ENCODE measurements at regions of chr2 and their contacts with region 1.

Region 1: GRCh38 chr2:144937910-144938709 is 418.2 kb upstream of the ZEB2 start:
- DNase-seq: no peak
- ATAC-seq: peak; percentile 80
- H3K4me3 ChIP-seq: no peak overlapping the region
- H3K27ac ChIP-seq: peak overlapping the region; percentile 40 to 93
- H3K4me1 ChIP-seq: peaks cover 7 to 15% of the 10 kb centered on the region in 2 donors
- H3K27me3 ChIP-seq: no peaks in the 10 kb centered on the region

Region 2: DNA sequence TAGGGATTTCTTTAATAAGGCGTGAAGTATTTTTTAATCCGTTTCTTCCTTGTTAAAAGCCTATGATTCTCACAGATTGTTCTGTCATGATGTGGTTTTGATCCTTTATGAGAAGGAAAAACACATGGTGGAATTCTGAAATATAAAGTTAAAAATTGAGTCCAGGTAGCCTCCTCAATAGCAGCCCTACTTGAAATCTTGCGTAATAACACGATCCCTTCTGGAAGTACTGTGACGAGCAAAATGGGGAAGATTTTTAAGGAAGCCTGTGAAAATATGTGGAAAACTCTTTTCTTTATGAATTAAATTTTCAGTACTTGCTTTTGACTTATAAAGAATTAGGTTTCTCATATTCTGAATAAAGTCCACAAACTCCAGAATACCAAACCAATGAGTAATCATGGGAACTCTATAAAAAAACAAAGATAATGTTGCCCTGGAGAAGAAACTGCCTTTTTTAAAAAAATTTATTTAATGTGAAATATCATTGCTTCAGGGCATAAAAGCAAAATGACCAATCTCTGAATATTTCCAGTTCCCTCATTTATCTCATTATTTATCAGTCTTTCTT is 58.2 kb after region 1 on chr2:
- intact Hi-C with region 1: loop called in 1 of 2 experiments (anchors 5 kb)
- DNase-seq: no peak
- ATAC-seq: no peak
- H3K4me3 ChIP-seq: peak overlapping the region in 1 of 2 donors; percentile 8
- H3K27ac ChIP-seq: no peak overlapping the region
- H3K4me1 ChIP-seq: no peaks in the 10 kb centered on the region
- H3K27me3 ChIP-seq: no peaks in the 10 kb centered on the region

Region 3: DNA sequence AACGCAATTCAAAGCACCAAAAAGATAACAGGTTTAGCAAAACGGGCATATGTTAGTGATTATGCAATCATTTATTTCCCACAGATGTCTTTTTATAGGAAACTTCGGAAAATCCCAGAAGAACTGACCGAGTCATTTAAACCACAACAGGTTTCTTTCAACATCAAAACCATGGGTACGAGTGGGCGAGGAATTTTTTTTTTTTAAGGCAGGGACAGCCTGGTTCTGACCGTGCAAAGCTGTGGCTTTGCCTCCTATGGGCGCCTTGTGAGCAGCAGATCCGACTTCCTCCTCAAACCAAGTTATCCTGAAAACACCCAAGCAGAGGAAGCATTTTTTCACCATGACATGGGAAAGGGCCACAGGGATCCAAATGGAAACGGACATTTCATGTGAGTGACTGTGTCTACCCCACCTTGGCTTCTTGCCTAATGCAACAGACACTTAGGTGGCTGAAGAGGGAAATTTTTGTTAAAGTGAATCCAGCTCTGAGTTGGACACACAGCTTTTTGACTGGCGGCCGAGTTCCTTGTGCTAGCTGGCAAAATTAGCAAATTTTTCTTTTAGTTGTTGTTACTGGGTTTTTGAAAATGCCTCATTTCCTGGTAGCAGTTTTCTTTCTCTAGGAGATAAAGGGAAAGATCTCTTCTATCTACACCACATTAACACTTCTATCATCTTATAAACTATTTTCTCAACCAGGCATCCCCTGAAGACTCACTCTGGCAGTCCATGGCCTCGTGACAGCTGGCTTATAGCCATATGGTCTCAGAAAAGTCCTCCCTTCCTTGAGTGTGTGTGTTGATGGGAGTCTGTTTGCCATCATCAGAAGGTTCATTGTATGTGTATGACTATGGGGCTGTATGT is 69.2 kb after region 1 on chr2:
- intact Hi-C with region 1: loop called in 1 of 2 experiments (anchors 5 kb)
- DNase-seq: peak; percentile 77 to 81
- ATAC-seq: peak; percentile 79
- H3K4me3 ChIP-seq: no peak overlapping the region
- H3K27ac ChIP-seq: peak overlapping the region; percentile 80 to 95
- H3K4me1 ChIP-seq: peaks cover under 1 to 6% of the 10 kb centered on the region in 2 donors
- H3K27me3 ChIP-seq: no peaks in the 10 kb centered on the region

Measured in aorta (tissue), 5 donors.